CD14-positive monocyte (primary cell): ENCODE measurements at regions of chr16 and their contacts with region 1.

Region 1: GRCh38 chr16:79601931-79602627 is 1.5 kb upstream of the MAF start:
- DNase-seq: peak; percentile 50 to 67 (median 62)
- H3K4me3 ChIP-seq: peak overlapping the region; percentile 47 to 88 (median 76)
- H3K4me3 Mint-ChIP-seq: peak overlapping the region; percentile 93 to 98
- H3K27ac ChIP-seq: peak overlapping the region in 1 of 2 donors; percentile 4
- H3K27ac Mint-ChIP-seq: peak overlapping the region in 2 of 7 donors; percentile 42 to 84
- H3K4me1 ChIP-seq: peaks cover 28 to 39% of the 10 kb centered on the region in 2 donors
- H3K4me1 Mint-ChIP-seq: peaks cover 37% of the 10 kb centered on the region
- H3K27me3 ChIP-seq: peaks cover 17 to 29% of the 10 kb centered on the region in 2 donors
- H3K27me3 Mint-ChIP-seq: peaks cover 30 to 46% (median 36%) of the 10 kb centered on the region in 3 donors
- CTCF ChIP-seq: peak; percentile 91

Region 2: GRCh38 chr16:78116946-78117345 is 1485.1 kb before region 1 on chr16:
- intact Hi-C with region 1: loop called in 1 of 2 experiments (anchors 10 kb)
- DNase-seq: no peak
- H3K4me3 ChIP-seq: no peak overlapping the region
- H3K4me3 Mint-ChIP-seq: no peak overlapping the region
- H3K27ac ChIP-seq: no peak overlapping the region
- H3K27ac Mint-ChIP-seq: no peak overlapping the region
- H3K4me1 ChIP-seq: no peaks in the 10 kb centered on the region
- H3K4me1 Mint-ChIP-seq: peaks cover 6% of the 10 kb centered on the region
- H3K27me3 ChIP-seq: no peaks in the 10 kb centered on the region
- H3K27me3 Mint-ChIP-seq: peaks cover 0 to 3% (median 0%) of the 10 kb centered on the region in 3 donors
- CTCF ChIP-seq: no peak

Region 3: GRCh38 chr16:78925083-78925767 is 676.9 kb before region 1 on chr16:
- intact Hi-C with region 1: loop called (anchors 5 to 10 kb)
- DNase-seq: peak; percentile 9 to 41 (median 37)
- H3K4me3 ChIP-seq: no peak overlapping the region
- H3K4me3 Mint-ChIP-seq: no peak overlapping the region
- H3K27ac ChIP-seq: no peak overlapping the region
- H3K27ac Mint-ChIP-seq: no peak overlapping the region
- H3K4me1 ChIP-seq: no peaks in the 10 kb centered on the region
- H3K4me1 Mint-ChIP-seq: no peaks in the 10 kb centered on the region
- H3K27me3 ChIP-seq: no peaks in the 10 kb centered on the region
- H3K27me3 Mint-ChIP-seq: peaks cover 0 to 1% (median 0%) of the 10 kb centered on the region in 3 donors
- CTCF ChIP-seq: peak; percentile 58

Region 4: GRCh38 chr16:79269211-79269863 is 332.7 kb before region 1 on chr16:
- intact Hi-C with region 1: loop called in 1 of 2 experiments (anchors 2 kb)
- DNase-seq: peak in 2 of 3 donors; percentile 8 to 56
- H3K4me3 ChIP-seq: no peak overlapping the region
- H3K4me3 Mint-ChIP-seq: peak overlapping the region; percentile 24 to 43
- H3K27ac ChIP-seq: no peak overlapping the region
- H3K27ac Mint-ChIP-seq: peak overlapping the region in 5 of 7 donors; percentile 1 to 73 (median 45)
- H3K4me1 ChIP-seq: peaks cover 28 to 30% of the 10 kb centered on the region in 2 donors
- H3K4me1 Mint-ChIP-seq: peaks cover 37% of the 10 kb centered on the region
- H3K27me3 ChIP-seq: no peaks in the 10 kb centered on the region
- H3K27me3 Mint-ChIP-seq: peaks cover 2 to 15% (median 6%) of the 10 kb centered on the region in 3 donors
- CTCF ChIP-seq: no peak

Region 5: GRCh38 chr16:80319187-80319586 is 717.1 kb after region 1 on chr16:
- intact Hi-C with region 1: no loop called
- DNase-seq: no peak
- H3K4me3 ChIP-seq: no peak overlapping the region
- H3K4me3 Mint-ChIP-seq: no peak overlapping the region
- H3K27ac ChIP-seq: no peak overlapping the region
- H3K27ac Mint-ChIP-seq: no peak overlapping the region
- H3K4me1 ChIP-seq: no peaks in the 10 kb centered on the region
- H3K4me1 Mint-ChIP-seq: no peaks in the 10 kb centered on the region
- H3K27me3 ChIP-seq: no peaks in the 10 kb centered on the region
- H3K27me3 Mint-ChIP-seq: peaks cover 1 to 4% (median 3%) of the 10 kb centered on the region in 3 donors
- CTCF ChIP-seq: no peak